ENCODE measurements at regions of chr7 and their contacts with region 1.

Region 1: GRCh38 chr7:93092757-93093370 is 24.9 kb downstream of the SAMD9 start:
- DNase-seq: peak; percentile 38
- H3K4me3 ChIP-seq: no peak overlapping the region
- H3K27ac ChIP-seq: no peak overlapping the region
- H3K4me1 ChIP-seq: no peaks in the 10 kb centered on the region
- H3K27me3 ChIP-seq: peaks cover 2% of the 10 kb centered on the region
- CTCF ChIP-seq: peak; percentile 62 to 69

Region 2: DNA sequence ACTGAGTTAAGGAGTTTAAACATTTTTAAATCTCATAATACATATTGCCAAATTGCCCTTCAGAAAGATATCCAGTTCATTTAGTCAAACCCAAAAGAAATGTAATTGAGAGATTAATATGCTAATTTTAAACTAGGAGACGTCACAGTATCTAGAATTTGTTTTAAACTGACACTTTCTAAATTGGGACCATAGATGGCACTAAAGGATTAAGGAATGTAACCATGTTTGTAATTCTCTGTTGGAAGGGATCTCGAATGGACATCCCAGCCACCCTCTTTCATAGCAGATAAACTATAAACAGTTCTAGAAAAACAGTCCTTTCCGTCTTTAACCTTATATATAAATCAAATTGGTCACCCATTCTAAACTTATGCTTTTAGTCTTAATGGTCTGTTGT is 85.3 kb after region 1 on chr7:
- CTCF ChIA-PET with region 1: no interaction called
- dilution Hi-C with region 1: no loop called
- in situ Hi-C with region 1: no loop called
- intact Hi-C with region 1: loop called (anchors 1 kb)
- DNase-seq: no peak
- H3K4me3 ChIP-seq: no peak overlapping the region
- H3K27ac ChIP-seq: no peak overlapping the region
- H3K4me1 ChIP-seq: no peaks in the 10 kb centered on the region
- H3K27me3 ChIP-seq: peaks cover 6% of the 10 kb centered on the region
- CTCF ChIP-seq: peak; percentile 34 to 40

Region 3: DNA sequence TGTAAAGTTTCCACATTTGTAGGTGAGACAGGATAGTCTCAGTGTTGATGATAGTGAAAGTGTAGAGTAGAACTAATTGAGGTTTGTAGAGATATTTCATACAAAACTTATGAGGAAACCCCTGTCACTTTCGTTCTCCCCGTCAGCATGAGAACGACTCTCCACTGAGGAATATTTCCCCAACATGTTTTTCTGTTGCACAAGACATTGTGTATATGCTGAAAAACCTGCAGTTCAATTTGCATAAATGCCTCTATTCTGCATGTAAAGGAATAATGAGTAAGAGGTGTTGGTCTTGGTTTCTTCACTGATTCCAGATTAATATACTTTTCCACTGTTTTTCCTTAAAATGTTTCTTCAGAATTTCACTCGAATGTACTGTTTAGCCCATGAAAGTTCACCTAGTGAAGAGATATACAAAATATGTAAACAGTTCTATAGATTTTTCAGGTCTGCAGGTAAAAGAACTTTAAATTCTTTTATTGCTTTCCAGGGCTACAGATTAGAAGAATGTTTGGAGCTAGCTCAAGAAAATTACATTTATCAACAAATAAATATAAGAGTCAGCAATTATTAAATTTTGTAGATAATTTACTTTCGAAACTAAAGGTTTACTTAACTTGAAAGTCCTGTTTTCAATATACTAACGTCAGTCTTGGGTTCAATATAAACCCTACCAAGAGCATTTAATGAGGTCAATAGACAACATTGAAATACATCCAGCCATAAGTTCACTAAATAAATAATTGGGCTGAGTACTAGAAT is 96.2 kb after region 1 on chr7:
- CTCF ChIA-PET with region 1: no interaction called
- dilution Hi-C with region 1: no loop called
- in situ Hi-C with region 1: no loop called
- intact Hi-C with region 1: no loop called
- DNase-seq: no peak
- H3K4me3 ChIP-seq: no peak overlapping the region
- H3K27ac ChIP-seq: no peak overlapping the region
- H3K4me1 ChIP-seq: peaks cover 11% of the 10 kb centered on the region
- H3K27me3 ChIP-seq: peaks cover 6% of the 10 kb centered on the region
- CTCF ChIP-seq: no peak